GM12878 (cell line): ENCODE measurements at regions of chr13 and their contacts with region 1.

Region 1: GRCh38 chr13:59906413-59907049 is 257.2 kb downstream of the DIAPH3 start:
- DNase-seq: no peak
- ATAC-seq: peak; percentile 63
- H3K4me3 ChIP-seq: no peak overlapping the region
- H3K27ac ChIP-seq: no peak overlapping the region
- H3K4me1 ChIP-seq: no peaks in the 10 kb centered on the region
- H3K27me3 ChIP-seq: no peaks in the 10 kb centered on the region
- CTCF ChIP-seq: peak; percentile 56 to 62 (median 59)
- EP300 ChIP-seq: no peak
- POLR2A ChIP-seq: no peak
- RAD21 ChIP-seq: peak; percentile 77

Region 2: DNA sequence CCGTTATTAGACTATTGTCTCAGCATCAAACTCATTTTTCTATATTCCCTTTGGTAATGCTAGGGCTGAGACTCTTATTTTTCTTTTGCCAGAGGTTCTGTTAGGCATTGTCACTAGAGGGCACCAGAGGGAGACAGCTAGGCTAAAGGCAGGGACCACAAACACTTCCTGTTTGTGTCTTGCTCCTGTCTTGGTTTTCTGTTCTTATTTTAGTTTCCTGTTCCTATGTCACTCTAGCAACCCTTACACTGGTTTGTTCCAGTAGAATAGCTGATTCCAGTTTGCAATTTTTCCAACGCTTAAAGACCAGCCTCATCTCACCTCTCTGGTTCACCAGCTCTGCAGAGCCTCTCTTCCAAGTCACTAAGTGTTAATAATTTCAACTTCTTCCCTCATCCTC is 514.8 kb before region 1 on chr13:
- CTCF ChIA-PET with region 1: interaction called, 17 read pairs
- POLR2A ChIA-PET with region 1: no interaction called
- RAD21 ChIA-PET with region 1: interaction called, 12 read pairs
- SMC1A ChIA-PET with region 1: interaction called, 9 read pairs
- in situ Hi-C with region 1: loop called (anchors 10 kb)
- intact Hi-C with region 1: loop called (anchors 1 kb)
- DNase-seq: peak; percentile 45
- ATAC-seq: peak; percentile 97
- H3K4me3 ChIP-seq: no peak overlapping the region
- H3K27ac ChIP-seq: peak overlapping the region; percentile 38
- H3K4me1 ChIP-seq: no peaks in the 10 kb centered on the region
- H3K27me3 ChIP-seq: no peaks in the 10 kb centered on the region
- CTCF ChIP-seq: peak; percentile 76 to 83 (median 83); a peak in 5 of 6 replicates
- EP300 ChIP-seq: no peak
- POLR2A ChIP-seq: no peak
- RAD21 ChIP-seq: peak; percentile 87

Region 3: DNA sequence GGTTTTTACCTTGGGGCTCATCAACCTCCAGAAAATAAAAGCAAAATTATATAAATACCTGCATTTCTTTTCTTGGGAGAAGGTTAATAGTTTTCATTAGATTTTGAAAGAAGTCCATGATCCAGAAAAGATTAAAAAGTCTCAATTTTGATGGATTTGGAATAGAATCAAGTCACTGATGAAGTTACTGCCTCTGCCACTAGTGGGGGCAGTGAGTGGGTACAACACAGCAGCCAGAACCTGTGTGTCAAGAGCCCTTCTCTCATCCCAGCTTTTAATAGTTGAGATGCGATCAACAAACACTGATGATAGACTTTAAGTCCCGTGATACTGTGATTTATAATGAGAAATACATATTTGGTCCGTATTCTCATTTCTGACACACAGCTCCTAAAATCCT is 429.5 kb before region 1 on chr13:
- CTCF ChIA-PET with region 1: no interaction called
- POLR2A ChIA-PET with region 1: no interaction called
- RAD21 ChIA-PET with region 1: no interaction called
- SMC1A ChIA-PET with region 1: no interaction called
- in situ Hi-C with region 1: no loop called
- intact Hi-C with region 1: loop called (anchors 10 kb)
- DNase-seq: no peak
- ATAC-seq: peak; percentile 54; the same call in 1 of the 3 replicates
- H3K4me3 ChIP-seq: no peak overlapping the region
- H3K27ac ChIP-seq: no peak overlapping the region
- H3K4me1 ChIP-seq: no peaks in the 10 kb centered on the region
- H3K27me3 ChIP-seq: no peaks in the 10 kb centered on the region
- CTCF ChIP-seq: peak in 2 of 3 experiments; percentile 35 to 49; a peak in 3 of 6 replicates
- EP300 ChIP-seq: no peak
- POLR2A ChIP-seq: no peak
- RAD21 ChIP-seq: no peak

Region 4: DNA sequence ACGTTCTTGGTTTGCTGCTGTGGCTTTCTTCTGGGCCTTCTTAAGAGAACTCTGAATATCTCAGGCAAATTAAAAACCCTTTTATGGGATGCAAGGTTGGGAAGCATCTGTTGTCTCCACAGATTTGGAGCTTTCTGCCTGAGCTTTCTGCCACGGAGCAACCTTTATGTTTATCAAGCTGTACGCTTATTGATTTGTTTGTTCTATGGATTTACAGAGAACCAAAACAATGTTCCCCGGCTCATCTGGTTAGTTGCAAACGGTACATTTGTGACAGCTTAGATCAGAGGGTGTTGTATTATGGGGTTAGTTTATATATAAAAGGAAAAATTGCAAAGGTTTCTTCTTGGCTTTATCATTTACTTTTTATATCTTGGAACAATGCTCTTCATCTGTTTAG is 222.4 kb before region 1 on chr13:
- CTCF ChIA-PET with region 1: interaction called, 119 read pairs
- POLR2A ChIA-PET with region 1: no interaction called
- RAD21 ChIA-PET with region 1: interaction called, 55 read pairs
- SMC1A ChIA-PET with region 1: interaction called, 62 read pairs
- in situ Hi-C with region 1: loop called (anchors 5 kb)
- intact Hi-C with region 1: loop called (anchors 1 kb)
- DNase-seq: no peak
- ATAC-seq: no peak
- H3K4me3 ChIP-seq: no peak overlapping the region
- H3K27ac ChIP-seq: no peak overlapping the region
- H3K4me1 ChIP-seq: no peaks in the 10 kb centered on the region
- H3K27me3 ChIP-seq: no peaks in the 10 kb centered on the region
- CTCF ChIP-seq: no peak
- EP300 ChIP-seq: no peak
- POLR2A ChIP-seq: no peak
- RAD21 ChIP-seq: no peak

Region 5: GRCh38 chr13:59690857-59691500 is 215.6 kb before region 1 on chr13:
- CTCF ChIA-PET with region 1: interaction called, 20 read pairs
- POLR2A ChIA-PET with region 1: no interaction called
- RAD21 ChIA-PET with region 1: interaction called, 3 read pairs
- SMC1A ChIA-PET with region 1: interaction called, 9 read pairs
- in situ Hi-C with region 1: no loop called
- intact Hi-C with region 1: no loop called
- DNase-seq: no peak
- ATAC-seq: peak; percentile 63
- H3K4me3 ChIP-seq: no peak overlapping the region
- H3K27ac ChIP-seq: no peak overlapping the region
- H3K4me1 ChIP-seq: no peaks in the 10 kb centered on the region
- H3K27me3 ChIP-seq: no peaks in the 10 kb centered on the region
- CTCF ChIP-seq: no peak
- EP300 ChIP-seq: no peak
- POLR2A ChIP-seq: no peak
- RAD21 ChIP-seq: no peak

Region 6: DNA sequence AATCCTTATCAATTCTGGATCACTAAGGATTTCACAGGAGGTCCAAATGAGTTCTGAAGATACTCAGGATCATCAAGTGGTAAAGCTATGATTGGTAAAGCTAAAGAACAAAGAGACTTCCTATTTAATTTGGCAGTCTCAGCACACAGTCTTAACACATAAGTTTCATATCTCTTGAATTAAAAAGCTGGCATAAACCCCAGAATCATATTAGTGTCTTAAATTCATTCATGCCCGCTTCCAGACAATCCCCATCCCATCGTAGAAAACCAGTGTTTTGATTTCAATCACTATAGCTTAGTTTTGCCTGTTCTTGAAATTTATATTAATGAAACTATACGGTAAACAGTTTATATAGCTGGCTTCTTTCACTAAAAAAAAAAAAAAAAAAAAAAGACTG is 21.5 kb before region 1 on chr13:
- CTCF ChIA-PET with region 1: interaction called, 10 read pairs
- POLR2A ChIA-PET with region 1: no interaction called
- RAD21 ChIA-PET with region 1: no interaction called
- SMC1A ChIA-PET with region 1: interaction called, 6 read pairs
- in situ Hi-C with region 1: no loop called
- intact Hi-C with region 1: no loop called
- DNase-seq: no peak
- ATAC-seq: no peak
- H3K4me3 ChIP-seq: no peak overlapping the region
- H3K27ac ChIP-seq: no peak overlapping the region
- H3K4me1 ChIP-seq: no peaks in the 10 kb centered on the region
- H3K27me3 ChIP-seq: no peaks in the 10 kb centered on the region
- CTCF ChIP-seq: no peak
- EP300 ChIP-seq: no peak
- POLR2A ChIP-seq: no peak
- RAD21 ChIP-seq: no peak

Region 7: GRCh38 chr13:59982631-59983382 is 76.3 kb after region 1 on chr13:
- CTCF ChIA-PET with region 1: no interaction called
- POLR2A ChIA-PET with region 1: no interaction called
- RAD21 ChIA-PET with region 1: no interaction called
- SMC1A ChIA-PET with region 1: no interaction called
- in situ Hi-C with region 1: no loop called
- intact Hi-C with region 1: no loop called
- DNase-seq: no peak
- ATAC-seq: no peak
- H3K4me3 ChIP-seq: no peak overlapping the region
- H3K27ac ChIP-seq: no peak overlapping the region
- H3K4me1 ChIP-seq: no peaks in the 10 kb centered on the region
- H3K27me3 ChIP-seq: no peaks in the 10 kb centered on the region
- CTCF ChIP-seq: no peak
- EP300 ChIP-seq: no peak
- POLR2A ChIP-seq: no peak
- RAD21 ChIP-seq: no peak

Region 8: GRCh38 chr13:60112771-60113170 is 206.2 kb after region 1 on chr13:
- CTCF ChIA-PET with region 1: no interaction called
- POLR2A ChIA-PET with region 1: no interaction called
- RAD21 ChIA-PET with region 1: no interaction called
- SMC1A ChIA-PET with region 1: no interaction called
- in situ Hi-C with region 1: no loop called
- intact Hi-C with region 1: no loop called
- DNase-seq: no peak
- ATAC-seq: no peak
- H3K4me3 ChIP-seq: no peak overlapping the region
- H3K27ac ChIP-seq: no peak overlapping the region
- H3K4me1 ChIP-seq: no peaks in the 10 kb centered on the region
- H3K27me3 ChIP-seq: no peaks in the 10 kb centered on the region
- CTCF ChIP-seq: no peak
- EP300 ChIP-seq: no peak
- POLR2A ChIP-seq: no peak
- RAD21 ChIP-seq: no peak

Region 9: GRCh38 chr13:60335531-60335930 is 429.0 kb after region 1 on chr13:
- CTCF ChIA-PET with region 1: interaction called, 3 read pairs
- POLR2A ChIA-PET with region 1: no interaction called
- RAD21 ChIA-PET with region 1: no interaction called
- SMC1A ChIA-PET with region 1: no interaction called
- in situ Hi-C with region 1: no loop called
- intact Hi-C with region 1: loop called (anchors 10 kb)
- DNase-seq: no peak
- ATAC-seq: no peak
- H3K4me3 ChIP-seq: no peak overlapping the region
- H3K27ac ChIP-seq: no peak overlapping the region
- H3K4me1 ChIP-seq: no peaks in the 10 kb centered on the region
- H3K27me3 ChIP-seq: no peaks in the 10 kb centered on the region
- CTCF ChIP-seq: peak in 2 of 3 experiments; percentile 23 to 47; a peak in 4 of 6 replicates
- EP300 ChIP-seq: no peak
- POLR2A ChIP-seq: no peak
- RAD21 ChIP-seq: peak; percentile 56